ENCODE measurements at regions of chr11 and their contacts with region 1.

Region 1: DNA sequence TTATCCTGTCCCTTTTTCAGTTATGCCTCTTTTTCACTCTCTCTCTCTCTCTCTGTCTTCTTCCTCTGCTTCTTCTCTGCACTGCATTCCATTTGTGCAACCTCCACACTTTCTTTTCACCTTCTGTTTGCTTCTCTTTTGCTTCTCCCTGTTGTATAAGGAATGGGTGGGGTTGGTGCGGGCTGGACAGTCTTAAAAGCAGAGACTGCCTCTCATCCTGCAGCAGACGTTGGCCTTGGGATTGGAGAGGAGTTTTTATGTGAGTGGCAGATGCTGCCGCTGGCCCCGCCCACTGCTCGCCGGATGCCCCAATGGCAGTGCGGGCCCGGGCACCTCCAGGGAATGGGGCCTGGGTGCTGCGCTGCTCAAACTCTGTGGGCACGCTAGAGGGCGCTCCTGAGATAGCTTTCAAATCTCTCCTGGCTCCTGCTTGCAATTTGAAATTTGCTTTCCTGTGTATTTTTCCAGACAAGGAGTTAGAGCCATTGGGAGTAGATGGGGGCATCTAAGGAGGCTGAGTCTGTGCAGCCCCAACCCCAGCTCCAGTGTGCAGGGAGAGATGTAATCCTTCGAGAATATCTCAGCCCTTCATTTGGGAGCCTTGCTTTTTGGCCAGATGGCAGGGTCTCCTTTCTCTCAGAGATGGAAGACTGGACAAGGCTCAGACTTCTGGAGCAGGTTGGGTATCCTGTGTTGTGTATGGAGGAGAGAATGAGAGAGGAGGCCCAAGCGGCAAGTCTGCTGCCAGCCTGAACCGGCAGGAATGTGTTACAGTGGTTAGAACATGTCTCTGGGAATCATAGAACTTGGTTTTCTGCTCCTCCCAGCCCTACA is 81.2 kb downstream of the GRAMD1B start:
- DNase-seq: peak; percentile 82
- H3K4me3 Mint-ChIP-seq: no peak overlapping the region
- H3K27ac Mint-ChIP-seq: no peak overlapping the region
- H3K4me1 Mint-ChIP-seq: peaks cover 7% of the 10 kb centered on the region
- H3K27me3 Mint-ChIP-seq: no peaks in the 10 kb centered on the region

Region 2: GRCh38 chr11:123429913-123430720 is 81.1 kb before region 1 on chr11 and contains the start of gene GRAMD1B:
- CTCF ChIA-PET with region 1: no interaction called
- intact Hi-C with region 1: no loop called
- DNase-seq: peak; percentile 87
- H3K4me3 Mint-ChIP-seq: peak within 1 kb of the TSS; percentile 92
- H3K27ac Mint-ChIP-seq: peak within 1 kb of the TSS; percentile 85
- H3K4me1 Mint-ChIP-seq: peaks cover 33% of the 10 kb centered on the region
- H3K27me3 Mint-ChIP-seq: peaks cover 2% of the 10 kb centered on the region
- total RNA-seq, gene GRAMD1B: 43.7 to 47.2 TPM

Region 3: DNA sequence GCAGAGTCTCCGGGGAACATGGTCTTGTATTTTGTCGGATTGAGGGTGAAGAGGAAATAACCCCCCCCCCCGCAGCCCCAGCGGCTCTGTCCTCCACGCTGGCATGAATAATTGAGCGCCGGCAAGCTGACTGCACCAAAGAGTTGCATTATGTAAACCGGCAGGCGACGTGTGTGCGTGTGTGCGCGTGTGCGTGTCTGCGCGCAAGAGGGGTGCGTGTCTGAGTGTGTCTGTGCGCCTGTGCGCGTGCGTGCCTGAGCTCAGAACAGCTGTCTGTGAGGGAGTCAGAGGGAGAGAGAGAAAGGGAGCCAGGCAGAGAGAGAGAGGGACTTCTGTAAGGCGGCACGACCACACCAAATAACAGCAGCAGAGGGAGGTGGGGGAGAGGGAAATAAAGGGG is 48.8 kb after region 1 on chr11:
- CTCF ChIA-PET with region 1: interaction called, 6 read pairs
- intact Hi-C with region 1: loop called (anchors 1 kb)
- DNase-seq: peak; percentile 64
- H3K4me3 Mint-ChIP-seq: peak overlapping the region; percentile 68
- H3K27ac Mint-ChIP-seq: no peak overlapping the region
- H3K4me1 Mint-ChIP-seq: peaks cover 14% of the 10 kb centered on the region
- H3K27me3 Mint-ChIP-seq: peaks cover 3% of the 10 kb centered on the region

Region 4: GRCh38 chr11:125214571-125215565 is 1703.6 kb after region 1 on chr11:
- CTCF ChIA-PET with region 1: no interaction called
- intact Hi-C with region 1: no loop called
- DNase-seq: no peak
- H3K4me3 Mint-ChIP-seq: no peak overlapping the region
- H3K27ac Mint-ChIP-seq: no peak overlapping the region
- H3K4me1 Mint-ChIP-seq: no peaks in the 10 kb centered on the region
- H3K27me3 Mint-ChIP-seq: peaks cover 20% of the 10 kb centered on the region

Measured in activated naive CD4-positive, alpha-beta T cell treated with anti-CD3 and anti-CD28 coated beads for 36 hours (primary cell).